ENCODE measurements at regions of chr3 and their contacts with region 1.

Region 1: DNA sequence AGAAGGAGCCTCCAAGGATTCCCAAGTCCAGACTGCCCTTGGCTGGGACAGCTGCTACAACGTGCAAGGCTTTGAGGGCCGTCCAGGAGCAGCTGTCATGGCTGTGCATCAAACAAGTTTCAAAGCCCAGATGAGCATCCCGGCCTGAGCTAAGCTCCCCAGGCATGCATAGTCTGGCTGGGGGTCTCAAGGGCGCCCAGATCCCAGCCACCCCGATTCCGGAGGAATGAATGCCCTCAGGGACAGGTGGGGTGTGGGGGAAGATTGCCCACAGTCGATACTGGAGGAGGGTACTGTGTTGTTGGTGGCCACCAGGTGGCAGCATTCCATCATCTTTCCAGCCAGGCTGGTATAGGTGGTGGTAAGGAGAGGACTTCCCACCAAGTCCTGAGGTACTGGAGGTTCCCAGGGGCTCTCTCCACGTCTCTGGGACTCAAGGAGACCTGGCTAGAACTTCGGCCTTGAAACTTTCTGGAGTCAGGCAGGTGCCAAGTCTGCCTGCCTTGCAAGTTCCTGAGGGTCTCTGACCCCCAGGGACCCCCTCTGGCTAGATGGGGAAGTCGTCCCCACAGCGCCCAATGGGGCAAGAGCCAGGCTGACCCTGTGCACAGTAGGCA is 32.8 kb downstream of the RBM5 start:
- DNase-seq: peak; percentile 56 to 69 (median 62)
- H3K4me3 ChIP-seq: no peak overlapping the region
- H3K4me3 Mint-ChIP-seq: no peak overlapping the region
- H3K27ac ChIP-seq: no peak overlapping the region
- H3K27ac Mint-ChIP-seq: peak overlapping the region in 4 of 7 donors; percentile 1 to 73 (median 65)
- H3K4me1 ChIP-seq: no peaks in the 10 kb centered on the region
- H3K4me1 Mint-ChIP-seq: peaks cover 0 to 11% (median 3%) of the 10 kb centered on the region in 4 donors
- H3K27me3 ChIP-seq: no peaks in the 10 kb centered on the region
- H3K27me3 Mint-ChIP-seq: no peaks in the 10 kb centered on the region

Region 2: GRCh38 chr3:49593041-49593440 is 528.5 kb before region 1 on chr3:
- CTCF ChIA-PET with region 1: no interaction called
- POLR2A ChIA-PET with region 1: no interaction called
- intact Hi-C with region 1: no loop called
- DNase-seq: no peak
- H3K4me3 ChIP-seq: no peak overlapping the region
- H3K4me3 Mint-ChIP-seq: no peak overlapping the region
- H3K27ac ChIP-seq: no peak overlapping the region
- H3K27ac Mint-ChIP-seq: no peak overlapping the region
- H3K4me1 ChIP-seq: no peaks in the 10 kb centered on the region
- H3K4me1 Mint-ChIP-seq: no peaks in the 10 kb centered on the region
- H3K27me3 ChIP-seq: no peaks in the 10 kb centered on the region
- H3K27me3 Mint-ChIP-seq: peaks cover 1 to 3% of the 10 kb centered on the region in 2 donors

Region 3: GRCh38 chr3:50088725-50089608 is 32.6 kb before region 1 on chr3 and contains the start of gene RBM5:
- CTCF ChIA-PET with region 1: no interaction called
- POLR2A ChIA-PET with region 1: interaction called, 11 read pairs
- intact Hi-C with region 1: no loop called
- DNase-seq: peak; percentile 88 to 95 (median 89)
- H3K4me3 ChIP-seq: peak within 1 kb of the TSS; percentile 93 to 100
- H3K4me3 Mint-ChIP-seq: peak within 1 kb of the TSS; percentile 96 to 99 (median 98)
- H3K27ac ChIP-seq: peak within 1 kb of the TSS; percentile 97
- H3K27ac Mint-ChIP-seq: peak within 1 kb of the TSS; percentile 91 to 99 (median 98)
- H3K4me1 ChIP-seq: peaks cover 23% of the 10 kb centered on the region
- H3K4me1 Mint-ChIP-seq: peaks cover 20 to 42% (median 30%) of the 10 kb centered on the region in 4 donors
- H3K27me3 ChIP-seq: no peaks in the 10 kb centered on the region
- H3K27me3 Mint-ChIP-seq: no peaks in the 10 kb centered on the region
- total RNA-seq, gene RBM5: 377 to 385 TPM

Region 4: GRCh38 chr3:50154840-50155474 is 33.4 kb after region 1 on chr3 and contains the start of gene SEMA3F:
- CTCF ChIA-PET with region 1: no interaction called
- POLR2A ChIA-PET with region 1: no interaction called
- intact Hi-C with region 1: loop called (anchors 2 kb)
- DNase-seq: peak; percentile 64 to 72 (median 70)
- H3K4me3 ChIP-seq: peak within 1 kb of the TSS in 1 of 2 donors; percentile 31
- H3K4me3 Mint-ChIP-seq: peak within 1 kb of the TSS; percentile 76 to 85 (median 83)
- H3K27ac ChIP-seq: no peak within 1 kb of the TSS
- H3K27ac Mint-ChIP-seq: peak within 1 kb of the TSS in 4 of 7 donors; percentile 60 to 73 (median 67)
- H3K4me1 ChIP-seq: peaks cover 16% of the 10 kb centered on the region
- H3K4me1 Mint-ChIP-seq: peaks cover 6 to 18% (median 10%) of the 10 kb centered on the region in 4 donors
- H3K27me3 ChIP-seq: peaks cover 14% of the 10 kb centered on the region
- H3K27me3 Mint-ChIP-seq: peaks cover 19 to 22% of the 10 kb centered on the region in 2 donors
- total RNA-seq, gene SEMA3F: not detected